ENCODE measurements at regions of chr3 and their contacts with region 1.

Region 1: DNA sequence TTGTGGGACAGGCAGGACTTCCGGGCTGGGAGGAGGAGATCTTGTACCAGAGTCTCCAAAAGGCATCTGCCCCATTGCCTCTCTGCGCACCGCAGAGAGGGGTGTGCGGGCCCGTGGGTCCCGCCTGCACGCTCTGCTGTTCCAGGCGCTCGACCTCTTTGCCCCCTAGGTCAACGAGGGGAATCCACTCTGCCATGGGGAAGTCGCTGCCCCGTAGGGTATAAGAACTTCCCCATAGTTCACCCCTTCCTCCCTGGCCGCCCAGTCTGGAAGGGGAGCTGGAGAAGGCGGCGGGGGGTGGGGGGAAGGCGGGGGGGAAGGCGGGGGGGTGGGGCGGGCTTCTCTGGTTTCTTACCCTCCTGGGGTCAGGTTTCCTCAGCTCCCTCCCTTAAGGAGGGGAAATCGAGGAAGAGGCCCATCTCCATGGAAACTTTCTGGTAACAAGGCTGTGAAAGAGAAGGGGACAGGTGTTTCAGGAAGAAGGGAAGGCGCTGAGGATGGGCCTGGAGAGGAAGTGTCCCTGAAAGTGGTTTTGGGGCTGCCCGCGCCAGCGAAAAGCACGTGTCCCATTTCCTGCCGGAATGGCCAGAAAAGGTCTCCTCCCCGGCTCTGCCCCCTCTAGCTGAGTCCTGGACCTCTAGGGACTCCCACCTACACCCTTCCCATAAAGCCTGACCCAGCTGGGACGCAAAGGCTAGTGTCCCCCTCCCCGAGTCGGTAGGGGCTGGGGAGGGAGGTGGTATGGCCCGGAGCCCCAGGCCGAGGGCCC is 27.5 kb downstream of the NR1I2 start:
- DNase-seq: no peak
- H3K4me3 ChIP-seq: peak overlapping the region; percentile 34 to 64 (median 45); a peak in 7 of 8 replicates
- H3K27ac ChIP-seq: no peak overlapping the region; the same call in 1 of the 2 replicates
- H3K4me1 ChIP-seq: peaks cover 0 to 8% (median 3%) of the 10 kb centered on the region in 4 experiments; a peak in 5 of 7 replicates
- H3K27me3 ChIP-seq: peaks cover 0 to 6% (median 1%) of the 10 kb centered on the region in 4 experiments; a peak in 3 of 7 replicates
- CTCF ChIP-seq: no peak
- EP300 ChIP-seq: no peak
- POLR2A ChIP-seq: 0 out of 3 replicates have a peak, but pooled peaks of 1 of the 2 experiments have one; percentile 16
- RAD21 ChIP-seq: no peak

Region 2: DNA sequence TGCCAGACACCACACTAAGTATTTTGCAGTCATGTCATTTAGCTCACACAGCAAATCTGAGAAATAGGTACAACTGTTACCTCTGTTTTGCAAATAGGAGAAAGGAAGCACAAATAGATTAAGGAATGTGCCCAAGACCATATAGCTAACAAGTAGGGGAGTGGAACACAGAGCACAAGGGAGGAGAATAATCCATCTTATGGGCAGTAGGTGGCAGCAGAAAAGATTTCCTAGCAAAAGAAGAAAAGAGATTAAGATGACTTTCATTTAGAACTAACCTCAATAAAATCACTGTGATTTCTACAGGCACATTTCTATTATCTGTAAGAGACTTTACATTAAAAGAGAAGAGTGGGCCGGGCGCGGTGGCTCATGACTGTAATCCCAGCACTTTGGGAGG is 21.6 kb after region 1 on chr3:
- CTCF ChIA-PET with region 1: interaction called, 17 read pairs
- POLR2A ChIA-PET with region 1: no interaction called
- DNase-seq: no peak
- H3K4me3 ChIP-seq: no peak overlapping the region
- H3K27ac ChIP-seq: no peak overlapping the region
- H3K4me1 ChIP-seq: peaks cover 0 to 3% (median 1%) of the 10 kb centered on the region in 4 experiments; a peak in 2 of 7 replicates
- H3K27me3 ChIP-seq: no peaks in the 10 kb centered on the region
- CTCF ChIP-seq: peak in 2 of 3 experiments; percentile 9 to 45; a peak in 2 of 4 replicates
- EP300 ChIP-seq: no peak
- POLR2A ChIP-seq: no peak
- RAD21 ChIP-seq: peak in 1 of 2 experiments; percentile 18; a peak in 1 of 4 replicates

Region 3: GRCh38 chr3:119849126-119849525 is 39.7 kb after region 1 on chr3:
- CTCF ChIA-PET with region 1: no interaction called
- POLR2A ChIA-PET with region 1: no interaction called
- DNase-seq: no peak
- H3K4me3 ChIP-seq: no peak overlapping the region
- H3K27ac ChIP-seq: no peak overlapping the region
- H3K4me1 ChIP-seq: no peaks in the 10 kb centered on the region
- H3K27me3 ChIP-seq: no peaks in the 10 kb centered on the region
- CTCF ChIP-seq: no peak
- EP300 ChIP-seq: no peak
- POLR2A ChIP-seq: no peak
- RAD21 ChIP-seq: no peak

Measured in H1 (cell line).